Activated CD4-positive, alpha-beta T cell treated with anti-CD3 and anti-CD28 coated beads, Interleukin-2, amount 10 ng/mL, durations not matched to agents 7 days and 5 days (primary cell): ENCODE measurements at regions of chr1 and their contacts with region 1.

Region 1: DNA sequence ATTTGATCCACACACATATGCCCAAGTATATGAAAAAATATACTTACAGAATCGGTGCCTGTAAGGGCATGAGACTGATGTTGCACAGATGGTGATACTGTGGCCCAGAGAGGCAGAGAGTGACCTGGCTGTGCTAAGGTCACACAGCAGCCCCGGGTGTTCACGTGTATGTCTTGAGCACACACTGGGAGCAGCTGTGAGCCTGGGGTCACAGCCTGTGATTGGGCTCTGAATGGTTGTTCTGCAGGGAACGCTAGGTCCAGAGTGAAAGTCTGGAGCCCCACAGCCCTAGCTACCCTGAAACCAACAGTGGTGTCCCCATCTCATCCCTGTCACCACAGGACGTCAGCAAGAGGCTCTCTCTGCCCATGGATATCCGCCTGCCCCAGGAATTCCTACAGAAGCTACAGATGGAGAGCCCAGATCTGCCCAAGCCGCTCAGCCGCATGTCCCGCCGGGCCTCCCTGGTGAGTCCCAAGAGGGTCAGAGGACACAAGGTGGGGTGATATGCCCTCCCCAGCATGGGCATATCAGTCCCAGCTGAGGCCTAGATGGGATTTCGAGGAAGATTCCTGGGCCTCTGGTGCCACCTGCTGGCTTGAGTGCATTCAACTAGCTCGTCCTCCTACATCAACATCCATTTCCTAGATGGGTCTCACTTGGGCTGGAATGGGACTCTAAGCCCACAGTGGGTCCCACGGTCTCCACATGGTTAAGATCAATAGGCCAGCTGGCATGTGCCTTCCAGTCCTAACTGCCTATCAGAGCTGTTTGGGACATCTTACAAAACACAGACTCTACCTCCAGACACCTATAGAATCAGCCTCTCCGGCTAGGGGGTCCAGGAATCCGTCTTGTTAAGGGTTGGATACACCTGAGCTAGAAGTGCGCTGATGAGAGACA is 19.7 kb downstream of the CDK18 start:
- DNase-seq: peak; percentile 77
- H3K4me3 Mint-ChIP-seq: no peak overlapping the region
- H3K27ac Mint-ChIP-seq: no peak overlapping the region
- H3K4me1 Mint-ChIP-seq: no peaks in the 10 kb centered on the region
- H3K27me3 Mint-ChIP-seq: no peaks in the 10 kb centered on the region

Region 2: DNA sequence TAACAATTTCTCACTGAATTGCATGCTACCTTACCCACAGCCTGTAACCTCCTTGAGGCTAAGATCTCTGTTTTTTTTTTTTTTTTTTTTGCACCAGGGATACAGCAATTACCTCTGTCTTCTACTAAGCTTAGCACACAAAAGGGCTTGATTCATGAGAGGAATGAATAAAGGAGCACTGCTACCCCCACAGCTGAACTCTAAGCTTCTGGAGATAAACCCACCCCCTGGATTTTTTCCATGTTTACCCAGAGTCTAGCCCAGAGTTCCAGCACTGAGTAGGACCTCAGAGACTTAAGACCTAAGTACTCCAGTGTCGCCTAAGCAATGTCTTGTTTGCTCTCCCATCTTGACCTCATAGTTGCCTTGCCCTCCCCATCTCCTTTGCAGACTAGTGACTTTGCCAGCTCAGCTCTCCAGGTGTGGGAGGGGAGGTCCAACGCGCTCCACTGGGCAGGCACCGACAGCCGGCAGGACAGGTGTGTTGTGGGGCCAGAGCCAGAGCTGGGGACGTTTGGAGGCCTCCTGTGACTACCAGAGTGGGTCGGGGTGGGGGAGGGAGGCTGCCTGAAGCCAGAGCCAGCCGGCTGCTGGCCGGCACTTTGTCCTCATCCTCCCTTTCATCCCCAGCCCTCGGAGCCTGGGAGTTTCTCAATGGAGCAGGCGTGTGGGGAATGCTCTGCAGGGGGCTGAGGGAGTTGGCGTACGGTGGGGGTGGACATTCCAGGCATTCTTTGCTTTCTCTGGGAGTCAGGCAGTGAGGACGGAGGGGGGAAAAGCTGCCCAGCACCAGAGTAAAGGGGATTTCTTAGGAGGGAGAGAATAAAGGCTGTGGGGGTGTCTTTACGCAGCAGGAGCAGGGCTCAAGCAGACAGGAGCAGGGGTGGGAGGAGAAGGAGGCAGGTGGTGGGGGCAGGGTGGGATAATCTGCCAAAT is 223.0 kb before region 1 on chr1:
- CTCF ChIA-PET with region 1: no interaction called
- POLR2A ChIA-PET with region 1: no interaction called
- DNase-seq: no peak
- H3K4me3 Mint-ChIP-seq: no peak overlapping the region
- H3K27ac Mint-ChIP-seq: peak overlapping the region; percentile 57
- H3K4me1 Mint-ChIP-seq: peaks cover 25% of the 10 kb centered on the region
- H3K27me3 Mint-ChIP-seq: no peaks in the 10 kb centered on the region

Region 3: DNA sequence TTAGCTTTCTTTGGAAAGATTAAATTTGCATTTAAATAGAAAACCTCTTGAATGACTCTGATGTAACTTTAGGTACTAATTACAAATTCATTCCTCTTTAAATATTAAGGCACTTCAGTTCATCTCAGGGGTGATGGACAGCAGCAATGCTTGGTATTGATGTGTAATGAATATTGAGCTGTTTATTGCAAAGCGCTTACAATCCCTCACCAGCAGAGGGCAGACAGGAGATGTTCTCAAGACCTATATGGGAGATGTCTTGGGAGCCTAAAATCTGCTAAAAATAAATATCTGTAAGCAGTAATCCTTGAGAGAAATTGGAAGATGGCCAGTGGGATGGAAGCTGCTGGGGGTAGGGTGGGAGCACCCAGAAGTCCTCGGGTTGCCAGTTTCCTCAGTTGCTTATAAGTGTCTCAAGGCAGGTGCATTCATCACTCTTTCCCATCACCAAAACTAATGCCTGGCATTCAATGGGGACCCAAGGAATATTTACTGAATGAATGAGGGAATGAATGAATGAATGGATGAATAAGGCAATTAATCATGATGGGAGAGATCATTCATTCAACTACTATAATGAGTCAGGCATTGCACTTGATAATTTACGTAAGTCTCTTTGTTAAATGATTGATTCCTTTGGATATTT is 169.8 kb before region 1 on chr1:
- CTCF ChIA-PET with region 1: interaction called, 10 read pairs
- POLR2A ChIA-PET with region 1: no interaction called
- DNase-seq: peak; percentile 79
- H3K4me3 Mint-ChIP-seq: no peak overlapping the region
- H3K27ac Mint-ChIP-seq: no peak overlapping the region
- H3K4me1 Mint-ChIP-seq: no peaks in the 10 kb centered on the region
- H3K27me3 Mint-ChIP-seq: peaks cover 6% of the 10 kb centered on the region

Region 4: DNA sequence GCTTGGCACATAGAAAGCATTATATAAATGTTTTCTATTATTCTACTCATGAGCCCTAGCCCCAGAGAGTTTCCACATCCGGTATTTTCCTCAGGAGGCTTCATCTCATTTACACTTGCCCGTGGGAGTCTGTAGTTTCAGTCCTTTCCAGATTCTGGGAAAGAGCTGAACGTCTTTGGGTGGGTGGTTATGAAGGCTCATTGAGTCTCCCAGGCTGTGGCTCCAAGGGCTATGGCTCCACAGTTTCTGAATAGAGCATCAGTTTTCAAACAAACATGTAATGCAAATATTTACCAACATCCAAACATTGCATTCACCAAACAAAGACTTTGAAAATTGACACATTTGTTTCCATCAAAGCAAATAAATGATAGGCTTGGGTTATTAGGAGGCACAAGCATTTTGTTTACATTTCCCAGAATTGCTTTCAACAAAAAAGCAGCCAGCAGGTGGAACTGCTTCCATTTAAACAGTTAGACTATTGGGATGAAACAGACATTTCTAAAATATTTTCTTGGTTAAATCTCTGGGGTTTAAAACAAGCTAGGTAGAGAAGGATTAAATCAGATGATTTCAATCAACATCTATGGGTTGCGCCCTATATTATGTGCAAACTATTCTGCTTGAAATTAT is 101.0 kb before region 1 on chr1:
- CTCF ChIA-PET with region 1: no interaction called
- POLR2A ChIA-PET with region 1: no interaction called
- DNase-seq: no peak
- H3K4me3 Mint-ChIP-seq: no peak overlapping the region
- H3K27ac Mint-ChIP-seq: no peak overlapping the region
- H3K4me1 Mint-ChIP-seq: no peaks in the 10 kb centered on the region
- H3K27me3 Mint-ChIP-seq: peaks cover 51% of the 10 kb centered on the region

Region 5: DNA sequence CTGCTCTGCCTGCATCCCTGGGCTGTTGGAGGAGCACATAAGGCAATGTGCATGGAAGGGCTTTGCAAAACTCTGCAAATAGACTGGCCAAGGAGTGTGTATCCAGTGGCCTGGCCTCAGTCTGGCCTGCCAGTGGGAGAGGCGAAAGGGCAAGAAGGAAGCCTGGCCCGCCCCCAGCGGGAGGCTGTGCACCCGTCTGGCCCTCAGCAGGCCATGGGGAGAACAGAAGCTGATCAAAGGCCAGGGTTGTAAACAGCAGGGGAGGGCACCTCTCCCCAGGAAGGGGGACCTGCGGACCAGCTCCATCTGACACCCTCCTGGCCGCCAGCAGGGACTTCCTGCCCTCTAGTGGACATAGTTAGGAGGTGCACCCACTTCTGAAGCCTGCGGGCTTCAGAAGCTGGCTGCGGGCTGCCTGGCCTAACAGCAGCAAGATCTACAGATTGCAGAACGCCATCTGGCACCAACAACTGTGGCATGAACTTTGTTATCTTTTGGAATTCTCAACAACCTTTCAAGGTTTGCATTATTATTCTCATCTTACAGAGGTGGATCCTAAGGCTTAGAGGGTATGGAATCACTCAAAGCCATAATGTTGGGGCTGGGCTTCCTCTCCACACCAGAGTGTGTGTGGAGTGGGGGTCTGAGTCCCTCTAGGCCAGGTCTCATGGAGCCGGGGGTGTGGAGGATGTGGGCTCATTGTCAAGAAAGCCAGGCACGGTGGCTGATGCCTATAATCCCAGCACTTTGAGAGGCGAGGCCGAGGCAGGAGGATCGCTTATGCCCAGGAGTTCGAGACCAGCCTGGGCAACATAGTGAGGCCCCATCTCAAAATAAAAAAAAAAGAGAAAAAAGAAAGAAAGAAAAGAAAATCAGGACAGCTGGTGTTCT is 38.6 kb before region 1 on chr1:
- CTCF ChIA-PET with region 1: interaction called, 42 read pairs
- POLR2A ChIA-PET with region 1: no interaction called
- DNase-seq: peak; percentile 71
- H3K4me3 Mint-ChIP-seq: no peak overlapping the region
- H3K27ac Mint-ChIP-seq: no peak overlapping the region
- H3K4me1 Mint-ChIP-seq: peaks cover 18% of the 10 kb centered on the region
- H3K27me3 Mint-ChIP-seq: peaks cover 54% of the 10 kb centered on the region

Region 6: GRCh38 chr1:205507890-205508714 is 16.0 kb before region 1 on chr1:
- CTCF ChIA-PET with region 1: interaction called, 11 read pairs
- POLR2A ChIA-PET with region 1: no interaction called
- DNase-seq: no peak
- H3K4me3 Mint-ChIP-seq: no peak overlapping the region
- H3K27ac Mint-ChIP-seq: no peak overlapping the region
- H3K4me1 Mint-ChIP-seq: peaks cover 14% of the 10 kb centered on the region
- H3K27me3 Mint-ChIP-seq: peaks cover 11% of the 10 kb centered on the region

Region 7: GRCh38 chr1:205591522-205592351 is 67.6 kb after region 1 on chr1:
- CTCF ChIA-PET with region 1: interaction called, 10 read pairs
- POLR2A ChIA-PET with region 1: no interaction called
- DNase-seq: peak; percentile 89
- H3K4me3 Mint-ChIP-seq: peak overlapping the region; percentile 81
- H3K27ac Mint-ChIP-seq: peak overlapping the region; percentile 89
- H3K4me1 Mint-ChIP-seq: peaks cover 47% of the 10 kb centered on the region
- H3K27me3 Mint-ChIP-seq: no peaks in the 10 kb centered on the region

Region 8: DNA sequence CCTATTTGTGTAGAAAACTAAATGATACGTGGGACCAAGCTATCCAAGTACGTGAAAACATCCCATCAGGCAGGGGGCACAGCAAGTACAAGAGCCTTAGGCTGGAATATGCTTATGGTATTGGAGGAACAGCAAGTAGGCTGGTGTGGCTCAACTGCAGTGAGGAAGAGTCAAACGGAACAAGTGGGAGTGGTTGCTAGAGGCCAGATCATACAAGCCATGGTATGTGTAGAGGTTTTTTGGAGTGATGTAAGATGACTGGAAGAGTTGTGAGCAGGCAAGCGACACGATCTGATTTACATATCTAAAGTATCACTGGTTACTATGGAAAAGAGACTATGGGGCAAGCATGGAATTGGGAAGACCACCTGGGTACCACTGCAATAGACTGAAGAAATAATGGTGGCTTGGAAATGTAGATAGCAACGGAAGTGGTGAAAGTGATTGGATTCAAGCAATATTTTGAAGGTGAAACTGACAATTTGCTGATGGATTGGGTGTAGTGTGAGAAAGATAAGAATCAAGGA is 80.0 kb after region 1 on chr1:
- CTCF ChIA-PET with region 1: no interaction called
- POLR2A ChIA-PET with region 1: no interaction called
- DNase-seq: no peak
- H3K4me3 Mint-ChIP-seq: no peak overlapping the region
- H3K27ac Mint-ChIP-seq: no peak overlapping the region
- H3K4me1 Mint-ChIP-seq: peaks cover 38% of the 10 kb centered on the region
- H3K27me3 Mint-ChIP-seq: no peaks in the 10 kb centered on the region

Region 9: GRCh38 chr1:205658943-205659581 is 134.9 kb after region 1 on chr1:
- CTCF ChIA-PET with region 1: interaction called, 26 read pairs
- POLR2A ChIA-PET with region 1: no interaction called
- DNase-seq: peak; percentile 81
- H3K4me3 Mint-ChIP-seq: no peak overlapping the region
- H3K27ac Mint-ChIP-seq: no peak overlapping the region
- H3K4me1 Mint-ChIP-seq: no peaks in the 10 kb centered on the region
- H3K27me3 Mint-ChIP-seq: peaks cover 8% of the 10 kb centered on the region